A549 (cell line): ENCODE measurements at regions of chr15 and their contacts with region 1.

Region 1: GRCh38 chr15:79896637-79897379 is at the start of gene MTHFS:
- DNase-seq: peak; percentile 83 to 92
- ATAC-seq: peak; percentile 96 to 98
- H3K4me3 ChIP-seq: peak within 1 kb of the TSS; percentile 65
- H3K27ac ChIP-seq: peak within 1 kb of the TSS; percentile 93 to 98
- H3K4me1 ChIP-seq: peaks cover 37% of the 10 kb centered on the region
- CTCF ChIP-seq: peak; percentile 74
- EP300 ChIP-seq: no peak
- POLR2A ChIP-seq: peak; percentile 95
- RAD21 ChIP-seq: peak; percentile 60 to 85
- polyA plus RNA-seq, gene MTHFS: 125 and 158 TPM in 2 replicates

Region 2: DNA sequence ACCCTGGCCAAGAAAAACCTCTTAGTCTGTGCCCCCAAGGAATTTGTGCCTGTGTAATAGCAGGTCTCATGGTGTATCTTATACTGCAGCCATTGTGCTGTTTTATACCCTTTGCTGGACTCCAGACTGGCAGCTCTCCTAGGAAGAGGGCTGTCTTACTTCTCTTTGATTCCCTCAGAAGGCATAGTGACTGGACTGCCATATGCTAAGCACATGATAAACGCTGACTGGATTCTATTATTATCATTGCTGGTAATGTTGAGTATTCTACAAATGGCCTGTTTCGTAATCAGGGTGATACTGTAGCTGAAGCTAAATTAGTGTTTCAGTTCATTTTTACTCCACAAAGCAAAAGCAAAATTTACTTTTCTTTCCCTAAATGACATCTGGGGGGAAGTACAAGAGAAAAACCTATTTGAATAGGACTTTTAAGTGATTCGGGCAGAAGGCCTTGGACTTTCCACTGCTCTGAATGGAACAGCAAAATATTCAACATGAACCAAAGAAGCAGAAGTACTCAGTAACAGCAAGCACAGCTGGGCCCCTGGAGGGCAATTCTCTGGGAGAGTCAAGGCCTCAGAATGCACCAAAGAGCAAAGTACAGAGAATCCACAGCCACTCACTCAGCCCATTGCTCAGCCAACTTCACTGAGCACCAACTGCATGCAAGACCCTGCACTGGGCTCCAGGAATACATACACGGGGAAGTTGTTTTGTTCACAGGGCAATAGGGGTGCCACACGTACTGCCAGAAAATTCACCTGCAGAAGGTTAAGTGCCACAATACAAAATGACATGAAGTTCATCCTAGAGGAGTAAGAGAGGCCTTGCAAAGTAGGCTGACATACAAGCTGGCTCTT is 82.1 kb after region 1 on chr15:
- CTCF ChIA-PET with region 1: interaction called, 15 read pairs
- POLR2A ChIA-PET with region 1: no interaction called
- DNase-seq: no peak
- ATAC-seq: peak; percentile 45 to 57; a peak in 3 of 6 replicates
- H3K4me3 ChIP-seq: no peak overlapping the region
- H3K27ac ChIP-seq: peak overlapping the region in 1 of 2 experiments; percentile 31; a peak in 2 of 6 replicates
- H3K4me1 ChIP-seq: peaks cover 16% of the 10 kb centered on the region
- CTCF ChIP-seq: no peak
- EP300 ChIP-seq: no peak
- POLR2A ChIP-seq: no peak
- RAD21 ChIP-seq: no peak